ENCODE measurements at regions of chr17 and their contacts with region 1.

Region 1: DNA sequence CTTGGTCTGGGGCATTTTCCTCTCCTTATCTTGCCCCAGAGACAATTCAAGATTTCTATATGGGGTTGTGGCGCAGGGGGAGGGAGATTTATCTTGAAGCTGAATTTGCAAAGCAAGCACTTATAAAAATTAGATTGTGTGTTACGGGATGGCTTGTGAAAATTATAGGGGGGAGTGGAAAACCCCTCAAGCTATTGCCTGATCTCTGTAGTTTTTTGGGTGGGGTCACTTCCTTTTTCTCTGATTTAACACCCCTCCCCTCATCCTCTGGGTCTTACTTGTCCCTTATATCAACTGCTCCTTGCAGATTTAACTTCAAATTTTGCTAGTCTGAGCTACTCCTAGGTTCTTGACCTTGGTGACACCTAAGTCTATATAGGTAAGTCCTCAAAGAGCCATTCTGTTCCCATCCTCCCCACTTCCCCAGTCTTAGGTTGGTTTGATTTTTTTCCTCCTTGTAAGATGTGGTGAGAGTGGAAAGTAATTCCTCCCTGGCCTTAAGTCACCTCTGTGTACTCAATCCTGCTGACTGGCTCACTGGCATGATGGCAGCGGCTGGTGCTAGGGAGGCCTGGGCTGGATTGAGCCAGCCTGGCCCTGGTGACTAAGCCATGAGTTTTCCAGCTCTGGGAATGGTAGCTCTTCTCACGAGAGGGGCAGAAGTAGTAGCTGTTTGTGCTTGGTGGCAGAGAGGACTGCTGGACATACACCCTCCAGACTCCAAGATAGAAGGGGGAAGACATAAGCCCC is 2.3 kb downstream of the ARL4D start:
- DNase-seq: peak; percentile 86
- H3K4me3 Mint-ChIP-seq: peak overlapping the region; percentile 92
- H3K27ac Mint-ChIP-seq: peak overlapping the region; percentile 57
- H3K4me1 Mint-ChIP-seq: peaks cover 21% of the 10 kb centered on the region
- H3K27me3 Mint-ChIP-seq: no peaks in the 10 kb centered on the region
- CTCF ChIP-seq: no peak

Region 2: GRCh38 chr17:43388359-43389045 is 12.6 kb before region 1 on chr17:
- CTCF ChIA-PET with region 1: interaction called, 30 read pairs
- POLR2A ChIA-PET with region 1: interaction called, 654 read pairs
- intact Hi-C with region 1: no loop called
- DNase-seq: peak; percentile 94
- H3K4me3 Mint-ChIP-seq: peak overlapping the region; percentile 83
- H3K27ac Mint-ChIP-seq: peak overlapping the region; percentile 97
- H3K4me1 Mint-ChIP-seq: peaks cover 18% of the 10 kb centered on the region
- H3K27me3 Mint-ChIP-seq: no peaks in the 10 kb centered on the region
- CTCF ChIP-seq: no peak

Region 3: GRCh38 chr17:43760254-43760852 is 359.2 kb after region 1 on chr17:
- CTCF ChIA-PET with region 1: no interaction called
- POLR2A ChIA-PET with region 1: no interaction called
- intact Hi-C with region 1: no loop called
- DNase-seq: peak; percentile 95
- H3K4me3 Mint-ChIP-seq: no peak overlapping the region
- H3K27ac Mint-ChIP-seq: no peak overlapping the region
- H3K4me1 Mint-ChIP-seq: peaks cover 12% of the 10 kb centered on the region
- H3K27me3 Mint-ChIP-seq: no peaks in the 10 kb centered on the region
- CTCF ChIP-seq: peak; percentile 98

Measured in MCF 10A (cell line).